ENCODE measurements at regions of chr5 and their contacts with region 1.

Region 1: GRCh38 chr5:147822686-147823491 is 8.6 kb downstream of the SPINK1 start:
- DNase-seq: peak in 5 of 9 donors; percentile 18 to 69 (median 36)
- ATAC-seq: peak; percentile 88
- H3K4me3 ChIP-seq: no peak overlapping the region
- H3K4me3 Mint-ChIP-seq: no peak overlapping the region
- H3K27ac ChIP-seq: no peak overlapping the region
- H3K27ac Mint-ChIP-seq: peak overlapping the region in 1 of 9 donors; percentile 28
- H3K4me1 ChIP-seq: no peaks in the 10 kb centered on the region
- H3K4me1 Mint-ChIP-seq: no peaks in the 10 kb centered on the region
- H3K27me3 ChIP-seq: no peaks in the 10 kb centered on the region
- H3K27me3 Mint-ChIP-seq: peaks cover 0 to 21% (median 7%) of the 10 kb centered on the region in 5 donors

Region 2: GRCh38 chr5:147223948-147224791 is 598.7 kb before region 1 on chr5:
- CTCF ChIA-PET with region 1: no interaction called
- POLR2A ChIA-PET with region 1: no interaction called
- intact Hi-C with region 1: loop called in 1 of 2 experiments (anchors 10 kb)
- DNase-seq: no peak
- ATAC-seq: no peak
- H3K4me3 ChIP-seq: no peak overlapping the region
- H3K4me3 Mint-ChIP-seq: no peak overlapping the region
- H3K27ac ChIP-seq: no peak overlapping the region
- H3K27ac Mint-ChIP-seq: no peak overlapping the region
- H3K4me1 ChIP-seq: no peaks in the 10 kb centered on the region
- H3K4me1 Mint-ChIP-seq: peaks cover 0 to 12% (median 4%) of the 10 kb centered on the region in 7 donors
- H3K27me3 ChIP-seq: no peaks in the 10 kb centered on the region
- H3K27me3 Mint-ChIP-seq: peaks cover 0 to 12% (median under 1%) of the 10 kb centered on the region in 5 donors

Region 3: GRCh38 chr5:147453875-147454814 is 368.7 kb before region 1 on chr5:
- CTCF ChIA-PET with region 1: no interaction called
- POLR2A ChIA-PET with region 1: no interaction called
- intact Hi-C with region 1: loop called in 1 of 2 experiments (anchors 1 kb)
- DNase-seq: peak; percentile 8 to 77 (median 48)
- ATAC-seq: peak; percentile 82
- H3K4me3 ChIP-seq: peak overlapping the region; percentile 27
- H3K4me3 Mint-ChIP-seq: peak overlapping the region; percentile 77 to 91 (median 82)
- H3K27ac ChIP-seq: no peak overlapping the region
- H3K27ac Mint-ChIP-seq: peak overlapping the region in 1 of 9 donors; percentile 52
- H3K4me1 ChIP-seq: no peaks in the 10 kb centered on the region
- H3K4me1 Mint-ChIP-seq: peaks cover 8 to 31% (median 18%) of the 10 kb centered on the region in 7 donors
- H3K27me3 ChIP-seq: peaks cover 0 to 4% of the 10 kb centered on the region in 2 donors
- H3K27me3 Mint-ChIP-seq: peaks cover 63 to 88% (median 82%) of the 10 kb centered on the region in 5 donors

Region 4: DNA sequence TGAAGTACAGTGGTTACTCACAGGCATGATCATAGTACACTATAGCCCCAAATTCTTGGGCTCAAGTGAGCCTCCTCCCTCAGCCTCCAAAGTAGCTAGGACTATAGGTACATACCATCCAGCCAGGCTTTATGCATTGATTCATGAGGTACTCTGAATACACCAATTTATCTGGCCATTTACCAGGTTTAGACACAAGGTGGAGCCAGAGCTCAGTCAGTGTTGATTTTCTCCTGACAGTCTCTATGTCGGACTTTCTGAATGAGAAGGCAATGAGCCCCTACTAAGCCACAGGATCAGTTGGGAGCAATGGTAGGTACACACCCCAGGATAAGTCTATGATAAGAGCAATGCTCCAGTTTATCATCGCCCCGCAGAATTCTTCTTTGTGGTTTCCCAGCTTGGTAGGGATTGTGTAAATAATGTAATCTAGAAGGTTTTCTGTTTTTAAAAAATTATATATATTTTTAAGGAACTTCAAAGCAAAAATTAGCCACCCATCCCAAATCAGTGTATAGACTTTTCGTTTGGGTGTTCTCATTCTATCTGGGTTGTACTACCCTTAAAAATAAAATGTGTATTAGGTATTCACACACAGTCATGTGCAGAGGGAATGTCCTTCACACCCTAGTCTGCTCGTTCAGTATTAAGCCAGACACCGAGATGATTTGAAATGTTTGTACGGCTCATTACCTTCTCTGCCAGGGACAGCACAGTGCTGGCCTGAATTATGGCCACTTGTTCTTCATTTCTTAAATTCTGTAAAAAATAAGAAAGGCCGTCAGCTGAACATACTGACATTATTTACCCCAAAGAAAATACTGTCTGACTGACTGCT is 194.6 kb before region 1 on chr5:
- CTCF ChIA-PET with region 1: interaction called, 4 read pairs
- POLR2A ChIA-PET with region 1: no interaction called
- intact Hi-C with region 1: loop called in 1 of 2 experiments (anchors 1 kb)
- DNase-seq: peak in 7 of 9 donors; percentile 5 to 66 (median 36)
- ATAC-seq: peak; percentile 79
- H3K4me3 ChIP-seq: no peak overlapping the region
- H3K4me3 Mint-ChIP-seq: no peak overlapping the region
- H3K27ac ChIP-seq: no peak overlapping the region
- H3K27ac Mint-ChIP-seq: no peak overlapping the region
- H3K4me1 ChIP-seq: no peaks in the 10 kb centered on the region
- H3K4me1 Mint-ChIP-seq: no peaks in the 10 kb centered on the region
- H3K27me3 ChIP-seq: no peaks in the 10 kb centered on the region
- H3K27me3 Mint-ChIP-seq: peaks cover 0 to 5% (median 0%) of the 10 kb centered on the region in 5 donors

Region 5: GRCh38 chr5:147782110-147783028 is 40.5 kb before region 1 on chr5 and contains the start of gene JAKMIP2:
- CTCF ChIA-PET with region 1: no interaction called
- POLR2A ChIA-PET with region 1: no interaction called
- intact Hi-C with region 1: loop called in 1 of 2 experiments (anchors 5 kb)
- DNase-seq: peak; percentile 10 to 91 (median 72)
- ATAC-seq: peak; percentile 95
- H3K4me3 ChIP-seq: peak within 1 kb of the TSS; percentile 57
- H3K4me3 Mint-ChIP-seq: peak within 1 kb of the TSS; percentile 27 to 93 (median 83)
- H3K27ac ChIP-seq: peak within 1 kb of the TSS; percentile 19
- H3K27ac Mint-ChIP-seq: peak within 1 kb of the TSS in 8 of 9 donors; percentile 3 to 94 (median 87)
- H3K4me1 ChIP-seq: peaks cover 0 to 15% of the 10 kb centered on the region in 2 donors
- H3K4me1 Mint-ChIP-seq: peaks cover 6 to 27% (median 16%) of the 10 kb centered on the region in 7 donors
- H3K27me3 ChIP-seq: no peaks in the 10 kb centered on the region
- H3K27me3 Mint-ChIP-seq: peaks cover 0 to 22% (median 4%) of the 10 kb centered on the region in 5 donors
- total RNA-seq, gene JAKMIP2: 0.16 to 4.5 (median 0.88) TPM

Region 6: DNA sequence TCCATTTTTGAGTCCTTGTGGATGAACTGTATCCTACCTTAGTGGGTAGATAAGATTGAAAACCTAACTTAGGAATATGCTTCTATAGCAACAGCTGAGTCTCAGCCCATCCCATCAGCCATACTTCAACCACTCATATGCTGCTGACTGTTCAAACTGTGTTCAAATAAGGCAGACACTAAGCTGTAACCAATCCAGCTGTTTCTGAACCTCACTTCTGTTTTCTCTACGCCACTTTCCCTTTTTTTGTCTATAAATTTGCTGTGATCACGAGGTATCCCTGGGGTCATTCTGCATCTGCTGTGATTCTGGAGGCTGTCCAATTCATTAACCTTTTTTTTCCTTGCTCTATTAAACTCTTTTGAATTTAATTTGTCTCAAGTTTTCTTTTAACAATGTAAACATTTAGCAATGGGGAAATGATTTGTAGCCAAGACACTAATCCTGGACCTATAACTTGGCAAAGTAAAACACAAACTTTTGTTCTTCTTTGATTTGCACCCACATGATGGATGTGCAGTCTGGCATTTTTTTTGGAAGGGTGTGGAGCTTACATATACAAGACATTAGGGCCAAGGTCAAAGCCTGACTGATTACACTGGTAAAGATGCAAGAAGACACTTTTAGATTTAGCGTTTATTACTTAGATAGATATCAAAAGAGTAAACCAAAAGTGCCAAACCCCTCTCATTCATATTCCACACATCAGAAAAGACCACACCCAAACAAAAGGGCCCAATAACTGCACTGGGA is 40.7 kb after region 1 on chr5:
- CTCF ChIA-PET with region 1: no interaction called
- POLR2A ChIA-PET with region 1: no interaction called
- intact Hi-C with region 1: no loop called
- DNase-seq: no peak
- ATAC-seq: no peak
- H3K4me3 ChIP-seq: no peak overlapping the region
- H3K4me3 Mint-ChIP-seq: no peak overlapping the region
- H3K27ac ChIP-seq: no peak overlapping the region
- H3K27ac Mint-ChIP-seq: no peak overlapping the region
- H3K4me1 ChIP-seq: no peaks in the 10 kb centered on the region
- H3K4me1 Mint-ChIP-seq: no peaks in the 10 kb centered on the region
- H3K27me3 ChIP-seq: no peaks in the 10 kb centered on the region
- H3K27me3 Mint-ChIP-seq: peaks cover 0 to 5% (median 3%) of the 10 kb centered on the region in 5 donors

Region 7: GRCh38 chr5:149320791-149321330 is 1498.0 kb after region 1 on chr5:
- CTCF ChIA-PET with region 1: no interaction called
- POLR2A ChIA-PET with region 1: no interaction called
- intact Hi-C with region 1: no loop called
- DNase-seq: no peak
- ATAC-seq: no peak
- H3K4me3 ChIP-seq: no peak overlapping the region
- H3K4me3 Mint-ChIP-seq: no peak overlapping the region
- H3K27ac ChIP-seq: no peak overlapping the region
- H3K27ac Mint-ChIP-seq: no peak overlapping the region
- H3K4me1 ChIP-seq: peaks cover 0 to 3% of the 10 kb centered on the region in 2 donors
- H3K4me1 Mint-ChIP-seq: peaks cover 0 to 5% (median 4%) of the 10 kb centered on the region in 7 donors
- H3K27me3 ChIP-seq: no peaks in the 10 kb centered on the region
- H3K27me3 Mint-ChIP-seq: no peaks in the 10 kb centered on the region